Heart right ventricle (tissue), 16 donors: ENCODE measurements at regions of chr5 and their contacts with region 1.

Region 1: GRCh38 chr5:34522599-34523386 is 133.3 kb upstream of the RAI14 start:
- DNase-seq: peak; percentile 20 to 79
- ATAC-seq: peak in 7 of 8 donors; percentile 78 to 88 (median 83)
- H3K4me3 ChIP-seq: no peak overlapping the region
- H3K27ac ChIP-seq: peak overlapping the region in 1 of 10 donors; percentile 7
- H3K4me1 ChIP-seq: peaks cover 0 to 39% (median 4%) of the 10 kb centered on the region in 9 donors
- H3K27me3 ChIP-seq: no peaks in the 10 kb centered on the region
- CTCF ChIP-seq: peak; percentile 59 to 84 (median 76)

Region 2: DNA sequence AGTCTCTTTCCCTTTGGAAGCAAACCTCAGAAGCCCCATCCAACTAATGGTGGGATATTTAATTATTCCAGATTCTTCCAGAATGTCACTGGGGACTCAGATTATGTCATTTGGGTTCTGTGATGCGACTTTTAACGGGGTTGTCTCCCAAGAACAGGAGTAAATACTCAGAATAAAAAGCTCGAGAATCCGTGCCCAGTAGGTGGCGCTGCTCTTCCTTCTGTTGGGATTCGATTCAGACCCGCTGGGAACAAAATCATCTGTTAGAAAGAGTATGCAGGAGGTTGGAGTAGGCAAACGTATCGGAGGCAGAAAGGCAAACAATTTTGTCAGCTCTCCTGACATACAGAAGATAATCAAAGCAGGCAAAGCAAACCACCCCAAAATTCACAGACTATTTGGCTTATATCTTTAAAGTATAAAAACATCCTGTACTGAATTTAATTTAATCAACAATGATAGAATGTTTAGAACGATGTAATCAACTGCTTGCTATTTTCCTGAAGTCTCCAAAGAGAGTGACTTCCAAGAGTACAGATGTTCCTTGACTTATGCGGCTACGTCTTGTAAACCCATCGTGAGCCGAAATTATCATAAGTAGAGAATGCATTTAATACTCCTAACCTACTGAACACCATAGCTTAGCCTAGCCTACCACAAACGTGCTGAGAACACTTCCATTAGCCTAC is 36.5 kb before region 1 on chr5:
- intact Hi-C with region 1: loop called in 5 of 10 experiments (anchors 2 to 5 kb)
- DNase-seq: peak; percentile 78
- ATAC-seq: peak; percentile 65 to 91 (median 78)
- H3K4me3 ChIP-seq: no peak overlapping the region
- H3K27ac ChIP-seq: no peak overlapping the region
- H3K4me1 ChIP-seq: peaks cover 0 to 19% (median 7%) of the 10 kb centered on the region in 9 donors
- H3K27me3 ChIP-seq: no peaks in the 10 kb centered on the region
- CTCF ChIP-seq: peak; percentile 62 to 86 (median 83)

Region 3: DNA sequence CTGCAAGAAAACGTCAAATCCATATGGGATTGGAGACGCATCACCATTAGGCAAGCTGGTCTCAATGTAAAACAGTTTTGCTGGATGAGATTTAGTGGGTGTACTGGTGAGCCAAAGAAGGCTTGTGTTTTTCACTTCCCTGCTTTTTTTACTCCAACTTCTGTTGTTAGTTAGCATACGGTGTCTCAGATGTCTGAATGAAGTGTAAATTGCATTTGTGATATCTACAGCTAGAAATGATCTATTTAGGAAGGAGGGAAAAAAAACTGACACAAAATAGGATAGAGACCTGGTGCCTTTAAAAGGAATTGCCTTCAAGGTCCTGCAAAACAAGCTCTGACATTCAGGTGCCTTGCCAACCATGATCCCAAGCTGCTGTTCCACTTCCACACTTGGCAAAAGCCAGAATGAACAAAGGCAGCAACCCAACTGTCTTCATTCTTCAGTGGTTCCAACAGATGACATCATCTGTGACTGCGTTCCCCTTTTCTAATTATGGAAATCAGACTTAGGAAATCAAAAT is 29.2 kb after region 1 on chr5:
- intact Hi-C with region 1: no loop called
- DNase-seq: peak in 1 of 2 donors; percentile 41
- ATAC-seq: peak; percentile 40 to 87 (median 82)
- H3K4me3 ChIP-seq: no peak overlapping the region
- H3K27ac ChIP-seq: peak overlapping the region in 4 of 10 donors; percentile 19 to 51 (median 34)
- H3K4me1 ChIP-seq: peaks cover 0 to 27% (median 16%) of the 10 kb centered on the region in 9 donors
- H3K27me3 ChIP-seq: no peaks in the 10 kb centered on the region
- CTCF ChIP-seq: no peak

Region 4: GRCh38 chr5:34838785-34839714 is 316.3 kb after region 1 on chr5 and contains the start of gene TTC23L:
- intact Hi-C with region 1: loop called in 1 of 10 experiments (anchors 5 kb)
- DNase-seq: peak; percentile 84 to 88
- ATAC-seq: peak; percentile 92 to 97 (median 96)
- H3K4me3 ChIP-seq: peak within 1 kb of the TSS; percentile 60 to 88 (median 72)
- H3K27ac ChIP-seq: peak within 1 kb of the TSS in 7 of 10 donors; percentile 9 to 36 (median 23)
- H3K4me1 ChIP-seq: peaks cover 0 to 12% (median 3%) of the 10 kb centered on the region in 9 donors
- H3K27me3 ChIP-seq: peaks cover 0 to 5% (median 0%) of the 10 kb centered on the region in 7 donors
- CTCF ChIP-seq: no peak
- total RNA-seq, gene TTC23L: 0.66 TPM in 1 of 10 donors, not detected in the others

Region 5: DNA sequence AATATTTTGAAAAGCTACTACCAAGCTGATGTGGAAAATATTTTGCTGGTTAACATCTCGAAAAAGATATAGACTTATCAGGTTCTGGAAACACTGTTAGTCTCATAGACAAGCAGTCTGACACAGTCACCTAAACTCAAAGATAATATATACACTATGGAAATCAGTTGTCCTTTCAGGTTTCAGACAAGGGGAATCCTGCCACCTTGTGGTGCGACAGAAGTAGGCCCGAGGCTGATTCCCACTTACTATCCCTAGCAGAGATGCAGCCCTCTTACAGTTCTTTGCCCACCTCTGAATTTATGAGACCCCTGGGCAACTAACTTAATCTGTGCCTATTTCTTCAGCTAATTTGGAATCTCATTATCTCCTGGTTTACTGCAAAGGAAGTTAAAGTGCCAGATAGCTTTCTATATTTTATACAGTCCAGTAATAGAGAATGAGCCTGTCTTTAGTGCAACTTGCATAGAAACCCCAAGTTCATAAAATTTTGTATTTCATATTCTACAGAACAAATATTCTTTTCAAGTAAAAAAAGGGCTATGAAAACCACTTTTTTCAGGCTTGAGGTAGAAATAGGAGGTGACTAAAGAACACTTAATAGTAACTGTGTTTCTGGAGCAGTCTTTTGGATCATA is 375.6 kb after region 1 on chr5:
- intact Hi-C with region 1: loop called (anchors 1 to 5 kb)
- DNase-seq: peak; percentile 28 to 54
- ATAC-seq: peak; percentile 71 to 84 (median 76)
- H3K4me3 ChIP-seq: no peak overlapping the region
- H3K27ac ChIP-seq: no peak overlapping the region
- H3K4me1 ChIP-seq: no peaks in the 10 kb centered on the region
- H3K27me3 ChIP-seq: no peaks in the 10 kb centered on the region
- CTCF ChIP-seq: peak; percentile 81 to 95 (median 88)